ENCODE measurements at regions of chr10 and their contacts with region 1.

Region 1: GRCh38 chr10:71771821-71772617 is 1.3 kb downstream of the VSIR start:
- DNase-seq: peak; percentile 63
- ATAC-seq: no peak
- H3K4me3 Mint-ChIP-seq: peak overlapping the region; percentile 91
- H3K27ac Mint-ChIP-seq: peak overlapping the region; percentile 95
- H3K4me1 Mint-ChIP-seq: peaks cover 77% of the 10 kb centered on the region
- H3K27me3 Mint-ChIP-seq: no peaks in the 10 kb centered on the region
- CTCF ChIP-seq: no peak

Region 2: DNA sequence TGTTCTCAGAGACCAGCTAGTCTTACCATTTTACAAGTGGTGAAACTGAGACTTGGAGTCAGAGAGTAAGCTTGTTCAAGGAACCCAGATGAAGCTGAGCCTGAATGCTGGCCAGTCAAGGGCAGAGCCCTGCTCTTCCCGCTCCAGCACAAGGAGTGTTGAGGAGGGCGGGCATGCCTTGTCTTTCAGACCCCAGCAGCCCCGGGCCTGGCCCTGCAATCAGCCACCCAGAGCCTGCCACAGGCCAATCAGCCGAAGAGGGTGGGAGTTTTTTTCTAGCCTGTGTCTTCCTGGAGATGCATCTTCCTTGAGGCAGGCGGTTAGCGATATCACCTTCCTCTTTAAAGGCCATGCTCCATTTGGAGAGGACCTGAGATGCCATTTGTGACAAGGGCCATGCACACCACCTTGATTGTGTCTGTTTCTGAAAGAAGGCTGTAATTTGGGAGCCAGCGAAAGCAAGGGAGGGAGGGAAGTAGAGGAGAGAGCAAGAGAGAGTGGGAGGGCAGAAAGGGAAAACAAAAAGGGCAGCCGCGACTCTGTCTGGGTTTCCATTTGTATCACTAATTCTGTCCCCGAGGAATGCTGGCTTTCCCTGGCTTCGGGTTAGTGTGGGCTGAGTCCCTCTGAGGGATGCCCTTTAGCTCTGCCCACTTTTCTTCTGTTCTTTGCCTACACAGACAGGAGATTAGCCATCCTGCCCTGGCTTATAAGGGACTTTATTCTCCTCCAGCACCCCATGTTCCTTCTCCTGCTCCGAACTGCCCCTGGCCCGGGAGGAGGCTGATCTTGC is 367.3 kb before region 1 on chr10:
- CTCF ChIA-PET with region 1: no interaction called
- POLR2A ChIA-PET with region 1: no interaction called
- intact Hi-C with region 1: no loop called
- DNase-seq: no peak
- ATAC-seq: no peak
- H3K4me3 Mint-ChIP-seq: no peak overlapping the region
- H3K27ac Mint-ChIP-seq: no peak overlapping the region
- H3K4me1 Mint-ChIP-seq: no peaks in the 10 kb centered on the region
- H3K27me3 Mint-ChIP-seq: peaks cover 10% of the 10 kb centered on the region
- CTCF ChIP-seq: no peak

Region 3: DNA sequence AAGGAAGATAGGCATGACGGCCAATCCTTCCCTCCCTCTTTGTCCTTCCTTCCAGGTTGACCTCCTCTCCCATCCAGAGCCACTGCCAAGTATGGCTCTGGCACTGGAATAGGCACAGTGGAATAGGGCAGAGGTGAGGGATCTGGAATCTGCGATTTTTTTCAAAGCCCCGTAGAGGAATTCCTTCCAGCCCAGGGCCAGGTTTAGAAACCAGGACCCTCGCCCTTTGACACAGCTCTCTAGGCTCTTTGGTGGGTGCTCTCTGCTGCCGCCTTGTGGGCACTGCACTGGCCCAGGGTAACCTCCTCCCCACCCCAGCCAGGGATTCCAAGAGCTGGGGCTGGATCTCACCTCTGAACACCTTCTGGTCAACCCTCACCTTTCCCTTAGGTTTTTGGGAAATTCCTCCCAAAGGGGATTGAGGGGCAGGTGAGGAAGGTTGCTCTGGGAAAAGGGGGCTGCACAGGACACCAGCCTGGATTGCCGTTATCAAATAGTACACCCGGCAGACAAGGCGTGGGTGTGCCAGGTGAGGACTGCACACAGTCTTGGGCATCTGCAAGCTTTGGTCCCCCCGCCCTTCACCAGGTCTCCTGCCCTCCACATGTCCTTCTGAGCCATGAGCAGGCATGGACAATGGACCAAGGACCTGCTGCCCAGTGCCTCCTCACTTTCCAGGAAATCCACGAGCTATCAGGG is 75.2 kb before region 1 on chr10:
- CTCF ChIA-PET with region 1: interaction called, 41 read pairs
- POLR2A ChIA-PET with region 1: interaction called, 8 read pairs
- intact Hi-C with region 1: no loop called
- DNase-seq: peak; percentile 83
- ATAC-seq: peak; percentile 38
- H3K4me3 Mint-ChIP-seq: no peak overlapping the region
- H3K27ac Mint-ChIP-seq: no peak overlapping the region
- H3K4me1 Mint-ChIP-seq: peaks cover 55% of the 10 kb centered on the region
- H3K27me3 Mint-ChIP-seq: no peaks in the 10 kb centered on the region
- CTCF ChIP-seq: peak; percentile 94

Region 4: GRCh38 chr10:71719042-71719441 is 53.0 kb before region 1 on chr10:
- CTCF ChIA-PET with region 1: interaction called, 27 read pairs
- POLR2A ChIA-PET with region 1: interaction called, 116 read pairs
- intact Hi-C with region 1: no loop called
- DNase-seq: no peak
- ATAC-seq: no peak
- H3K4me3 Mint-ChIP-seq: no peak overlapping the region
- H3K27ac Mint-ChIP-seq: no peak overlapping the region
- H3K4me1 Mint-ChIP-seq: peaks cover 47% of the 10 kb centered on the region
- H3K27me3 Mint-ChIP-seq: no peaks in the 10 kb centered on the region
- CTCF ChIP-seq: no peak

Region 5: GRCh38 chr10:71740069-71740468 is 31.9 kb before region 1 on chr10:
- CTCF ChIA-PET with region 1: interaction called, 14 read pairs
- POLR2A ChIA-PET with region 1: interaction called, 16 read pairs
- intact Hi-C with region 1: no loop called
- DNase-seq: no peak
- ATAC-seq: no peak
- H3K4me3 Mint-ChIP-seq: no peak overlapping the region
- H3K27ac Mint-ChIP-seq: peak overlapping the region; percentile 97
- H3K4me1 Mint-ChIP-seq: peaks cover 100% of the 10 kb centered on the region
- H3K27me3 Mint-ChIP-seq: no peaks in the 10 kb centered on the region
- CTCF ChIP-seq: no peak

Region 6: DNA sequence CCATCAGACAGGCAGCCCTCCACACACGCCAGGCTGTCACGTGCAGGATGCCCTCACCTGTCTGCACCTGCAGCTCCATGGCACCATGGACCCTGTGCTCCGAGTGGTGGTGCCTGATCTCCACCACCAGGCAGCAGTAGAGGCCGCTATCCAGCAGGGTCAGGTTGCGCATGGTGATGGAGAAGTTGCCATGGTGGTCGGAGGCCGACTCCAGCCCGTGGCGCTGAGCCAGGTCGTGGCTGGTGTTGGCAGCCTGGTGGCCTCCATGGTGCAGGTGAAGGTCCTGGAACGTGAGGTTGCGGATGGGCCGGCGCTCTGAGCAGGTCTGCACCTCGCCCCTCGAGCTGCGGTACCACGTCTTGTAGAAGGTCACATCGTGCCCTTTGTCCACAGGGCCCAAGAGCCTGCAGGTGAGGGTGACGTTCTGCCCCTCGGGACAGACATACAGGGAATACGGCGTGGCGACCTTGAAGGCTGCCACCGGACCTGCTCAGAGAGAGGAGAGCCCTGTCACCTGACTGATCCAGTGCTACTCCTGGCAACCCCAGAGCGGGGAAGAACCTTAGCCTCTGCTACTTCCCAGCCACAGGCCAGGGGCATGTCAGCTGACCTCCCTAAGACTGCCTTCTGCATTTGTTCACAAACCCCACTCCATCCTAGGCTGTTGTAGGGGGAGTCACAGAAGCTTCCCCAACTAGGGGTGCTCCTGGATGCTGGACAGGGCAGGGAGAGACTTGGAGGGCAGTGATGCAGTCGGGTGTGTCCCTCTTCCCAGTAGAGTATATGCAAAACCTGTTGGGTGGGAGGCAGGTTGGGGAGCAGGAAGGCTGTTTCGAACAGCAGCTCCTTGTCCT is 10.3 kb before region 1 on chr10:
- CTCF ChIA-PET with region 1: interaction called, 108 read pairs
- POLR2A ChIA-PET with region 1: interaction called, 92 read pairs
- intact Hi-C with region 1: no loop called
- DNase-seq: no peak
- ATAC-seq: peak; percentile 1
- H3K4me3 Mint-ChIP-seq: no peak overlapping the region
- H3K27ac Mint-ChIP-seq: peak overlapping the region; percentile 88
- H3K4me1 Mint-ChIP-seq: peaks cover 85% of the 10 kb centered on the region
- H3K27me3 Mint-ChIP-seq: no peaks in the 10 kb centered on the region
- CTCF ChIP-seq: peak; percentile 20

Region 7: DNA sequence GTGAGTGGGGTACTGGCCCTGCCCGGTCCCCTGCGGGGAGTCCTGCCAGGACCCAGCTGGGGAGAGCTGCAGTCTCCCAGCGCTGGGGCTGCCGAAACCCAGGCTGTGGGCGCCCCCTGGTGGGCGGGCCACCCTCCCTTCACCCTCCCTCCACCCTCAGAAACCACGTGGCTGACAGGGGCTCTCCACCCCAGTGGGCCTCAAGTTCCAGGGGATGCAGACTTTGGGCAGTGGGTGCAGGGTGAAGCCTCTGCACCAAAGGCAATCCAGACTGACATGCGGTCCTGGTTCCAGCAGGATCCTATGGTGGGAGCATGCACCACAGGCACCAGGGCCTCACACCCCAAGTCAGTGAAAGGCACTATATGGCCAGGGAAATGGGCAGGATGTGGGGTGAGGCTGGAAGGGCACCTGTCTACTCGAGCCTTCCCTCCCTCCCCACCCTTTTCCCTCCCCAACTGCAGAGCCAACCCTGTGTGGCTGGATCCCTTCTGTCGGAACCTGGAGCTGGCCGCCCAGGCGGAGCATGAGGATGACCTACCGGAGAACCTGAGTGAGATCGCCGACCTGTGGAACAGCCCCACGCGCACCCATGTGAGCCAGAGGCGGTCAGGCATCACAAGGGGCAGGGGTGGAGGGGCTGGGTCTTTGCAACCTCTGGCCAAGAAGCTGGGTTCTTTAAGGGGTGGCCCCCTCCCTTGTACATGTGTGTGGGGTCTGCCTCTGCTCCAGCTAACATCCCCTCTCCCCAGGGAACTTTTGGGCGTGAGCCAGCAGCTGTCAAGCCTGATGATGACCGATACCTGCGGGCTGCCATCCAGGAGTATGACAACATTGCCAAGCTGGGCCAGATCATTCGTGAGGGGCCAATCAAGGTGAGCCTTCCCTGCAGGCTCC is 40.2 kb after region 1 on chr10:
- CTCF ChIA-PET with region 1: interaction called, 26 read pairs
- POLR2A ChIA-PET with region 1: interaction called, 6 read pairs
- intact Hi-C with region 1: loop called (anchors 5 kb)
- DNase-seq: peak; percentile 84
- ATAC-seq: peak; percentile 98
- H3K4me3 Mint-ChIP-seq: no peak overlapping the region
- H3K27ac Mint-ChIP-seq: no peak overlapping the region
- H3K4me1 Mint-ChIP-seq: peaks cover 3% of the 10 kb centered on the region
- H3K27me3 Mint-ChIP-seq: no peaks in the 10 kb centered on the region
- CTCF ChIP-seq: peak; percentile 94

Region 8: DNA sequence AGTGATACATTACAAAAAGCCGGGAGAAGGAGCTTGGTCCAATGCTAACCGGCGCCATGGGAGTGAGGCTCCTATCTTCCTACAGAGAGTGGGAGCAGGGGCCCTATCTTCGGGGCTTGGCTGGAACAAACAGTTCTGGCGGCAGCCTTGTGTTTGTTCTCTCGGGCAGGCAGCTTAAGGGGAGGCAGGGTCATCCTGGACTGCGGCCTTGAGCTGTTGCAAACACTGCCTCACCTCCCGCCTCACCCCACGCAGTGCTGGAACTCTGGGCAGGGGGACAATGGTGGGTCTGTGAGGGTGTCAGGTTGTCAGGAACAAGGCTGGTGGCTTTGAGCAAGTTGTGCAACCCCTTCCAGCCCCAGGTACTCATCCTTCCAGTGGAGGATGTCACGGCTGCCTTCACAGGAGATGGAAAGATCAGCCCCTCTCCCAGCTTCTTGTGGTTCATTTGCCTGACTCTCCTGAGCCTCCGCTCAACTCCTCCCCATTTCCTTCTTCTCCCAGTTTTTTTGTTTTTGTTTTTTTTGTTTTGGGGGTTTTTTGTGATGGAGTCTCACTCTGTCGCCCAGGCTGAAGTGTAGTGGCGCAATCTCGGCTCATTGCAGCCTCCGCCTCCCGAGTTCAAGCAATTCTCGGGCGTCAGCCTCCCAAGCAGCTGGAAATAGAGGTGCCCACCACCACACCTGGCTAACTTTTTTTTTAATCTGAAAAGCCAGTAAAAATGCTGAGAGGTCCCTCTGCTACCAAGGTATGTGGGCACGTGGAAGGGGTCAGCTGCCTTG is 258.9 kb after region 1 on chr10:
- CTCF ChIA-PET with region 1: no interaction called
- POLR2A ChIA-PET with region 1: no interaction called
- intact Hi-C with region 1: no loop called
- DNase-seq: no peak
- ATAC-seq: no peak
- H3K4me3 Mint-ChIP-seq: no peak overlapping the region
- H3K27ac Mint-ChIP-seq: no peak overlapping the region
- H3K4me1 Mint-ChIP-seq: peaks cover 5% of the 10 kb centered on the region
- H3K27me3 Mint-ChIP-seq: peaks cover 2% of the 10 kb centered on the region
- CTCF ChIP-seq: no peak

Region 9: DNA sequence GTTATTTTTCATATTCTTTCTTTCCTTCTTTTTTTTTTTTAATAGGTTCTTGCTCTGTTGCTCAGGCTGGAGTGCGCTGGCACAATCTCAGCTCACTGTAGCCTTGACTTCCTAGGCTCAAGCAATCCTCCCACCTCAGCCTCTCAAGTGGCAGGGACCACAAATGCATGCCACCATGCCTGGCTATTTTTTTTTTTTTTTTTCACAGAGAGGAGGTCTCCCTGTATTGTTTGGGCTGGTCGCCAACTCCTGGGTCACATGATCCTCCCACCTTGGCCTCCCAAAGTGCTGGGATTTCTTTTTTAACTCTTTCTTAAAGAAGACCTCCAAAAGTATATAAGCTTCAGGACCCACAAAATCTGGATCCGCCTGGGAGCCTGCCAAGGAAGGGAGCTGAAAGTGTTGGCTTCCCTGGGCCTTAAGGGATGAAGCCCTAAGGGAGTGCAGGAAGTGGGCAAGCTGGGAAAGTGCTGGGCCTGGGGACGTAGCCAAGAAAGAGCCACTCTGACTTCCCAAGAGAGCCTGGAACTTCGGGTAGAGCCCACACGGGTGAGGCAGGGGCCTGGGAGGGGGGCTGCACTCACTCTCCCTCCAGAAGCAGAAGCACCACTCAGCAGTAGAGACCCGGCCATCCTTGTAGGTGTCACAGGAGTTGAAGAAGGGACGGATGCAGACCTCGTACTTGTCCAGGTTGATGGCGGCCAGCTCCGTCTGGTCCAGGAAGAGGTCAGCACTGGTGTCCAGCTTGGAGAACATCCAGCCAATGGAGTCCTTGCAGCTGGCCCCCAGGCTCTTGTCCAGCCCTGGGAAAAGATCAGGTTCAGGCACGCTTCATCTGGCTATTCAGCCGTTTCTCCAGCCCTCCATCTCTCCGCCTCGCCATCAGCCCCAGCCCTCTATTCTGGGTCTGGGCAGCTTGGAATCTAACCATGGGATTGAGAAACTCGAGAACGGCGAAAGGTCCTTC is 294.6 kb after region 1 on chr10:
- CTCF ChIA-PET with region 1: no interaction called
- POLR2A ChIA-PET with region 1: no interaction called
- intact Hi-C with region 1: no loop called
- DNase-seq: no peak
- ATAC-seq: no peak
- H3K4me3 Mint-ChIP-seq: no peak overlapping the region
- H3K27ac Mint-ChIP-seq: peak overlapping the region; percentile 57
- H3K4me1 Mint-ChIP-seq: peaks cover 27% of the 10 kb centered on the region
- H3K27me3 Mint-ChIP-seq: no peaks in the 10 kb centered on the region
- CTCF ChIP-seq: no peak